ENCODE measurements at regions of chr10 and their contacts with region 1.

Region 1: DNA sequence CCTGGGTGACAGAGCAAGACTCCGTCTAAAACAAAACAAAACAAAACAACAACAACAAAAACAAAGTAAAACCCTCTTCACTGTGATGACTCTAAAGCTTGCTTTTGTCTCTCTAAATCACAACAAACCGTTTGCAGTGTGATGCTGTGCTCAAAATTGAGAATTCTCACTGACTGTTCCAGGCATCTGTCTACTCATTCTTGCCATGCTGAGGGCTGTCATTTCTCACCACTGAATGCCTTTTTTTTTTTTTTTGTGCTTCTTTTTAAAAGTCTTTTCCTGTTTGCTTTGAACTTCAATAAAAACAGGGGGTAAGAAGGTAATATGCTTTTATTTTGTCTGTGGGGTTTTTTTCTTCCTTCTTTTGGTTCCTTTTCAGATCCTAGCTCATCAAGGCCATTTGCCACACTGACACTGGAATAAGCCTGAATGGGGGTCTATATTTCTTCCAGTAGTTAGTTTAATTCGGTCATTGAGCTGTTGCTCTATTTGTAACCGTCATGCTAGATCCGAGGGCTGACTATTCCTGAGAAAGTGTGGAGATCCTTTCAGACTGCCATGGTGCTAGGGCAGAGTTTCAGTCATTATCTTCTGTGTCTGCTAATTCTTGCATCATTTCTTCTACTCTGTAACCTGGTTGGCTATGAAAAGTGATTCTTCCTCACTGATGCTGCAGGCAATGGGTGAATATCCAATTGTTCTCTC is 10.6 kb downstream of the FAS start:
- DNase-seq: peak; percentile 73
- H3K4me3 Mint-ChIP-seq: peak overlapping the region; percentile 53
- H3K27ac Mint-ChIP-seq: peak overlapping the region; percentile 83
- H3K4me1 Mint-ChIP-seq: peaks cover 54% of the 10 kb centered on the region
- H3K27me3 Mint-ChIP-seq: no peaks in the 10 kb centered on the region

Region 2: GRCh38 chr10:88409236-88409635 is 591.9 kb before region 1 on chr10:
- CTCF ChIA-PET with region 1: no interaction called
- intact Hi-C with region 1: loop called (anchors 2 kb)
- DNase-seq: no peak
- H3K4me3 Mint-ChIP-seq: no peak overlapping the region
- H3K27ac Mint-ChIP-seq: no peak overlapping the region
- H3K4me1 Mint-ChIP-seq: peaks cover 8% of the 10 kb centered on the region
- H3K27me3 Mint-ChIP-seq: no peaks in the 10 kb centered on the region

Region 3: GRCh38 chr10:88880282-88881076 is 120.7 kb before region 1 on chr10:
- CTCF ChIA-PET with region 1: no interaction called
- intact Hi-C with region 1: loop called (anchors 2 kb)
- DNase-seq: peak; percentile 82
- H3K4me3 Mint-ChIP-seq: peak overlapping the region; percentile 95
- H3K27ac Mint-ChIP-seq: peak overlapping the region; percentile 97
- H3K4me1 Mint-ChIP-seq: peaks cover 58% of the 10 kb centered on the region
- H3K27me3 Mint-ChIP-seq: no peaks in the 10 kb centered on the region

Region 4: GRCh38 chr10:88960802-88961201 is 40.4 kb before region 1 on chr10:
- CTCF ChIA-PET with region 1: no interaction called
- intact Hi-C with region 1: loop called (anchors 1 kb)
- DNase-seq: peak; percentile 32
- H3K4me3 Mint-ChIP-seq: no peak overlapping the region
- H3K27ac Mint-ChIP-seq: no peak overlapping the region
- H3K4me1 Mint-ChIP-seq: peaks cover 24% of the 10 kb centered on the region
- H3K27me3 Mint-ChIP-seq: no peaks in the 10 kb centered on the region

Region 5: GRCh38 chr10:89022734-89023133 is 21.6 kb after region 1 on chr10:
- CTCF ChIA-PET with region 1: no interaction called
- intact Hi-C with region 1: loop called (anchors 2 kb)
- DNase-seq: no peak
- H3K4me3 Mint-ChIP-seq: no peak overlapping the region
- H3K27ac Mint-ChIP-seq: no peak overlapping the region
- H3K4me1 Mint-ChIP-seq: no peaks in the 10 kb centered on the region
- H3K27me3 Mint-ChIP-seq: no peaks in the 10 kb centered on the region

Region 6: GRCh38 chr10:89327784-89328441 is 326.7 kb after region 1 on chr10 and contains the start of gene IFIT3:
- CTCF ChIA-PET with region 1: no interaction called
- intact Hi-C with region 1: loop called (anchors 1 kb)
- DNase-seq: peak; percentile 39
- H3K4me3 Mint-ChIP-seq: peak within 1 kb of the TSS; percentile 67
- H3K27ac Mint-ChIP-seq: peak within 1 kb of the TSS; percentile 17
- H3K4me1 Mint-ChIP-seq: peaks cover 39% of the 10 kb centered on the region
- H3K27me3 Mint-ChIP-seq: peaks cover 2% of the 10 kb centered on the region
- total RNA-seq, gene IFIT3: 13.9 to 14.4 TPM

Measured in activated naive CD4-positive, alpha-beta T cell treated with anti-CD3 and anti-CD28 coated beads for 36 hours (primary cell).